ENCODE measurements at regions of chr15 and their contacts with region 1.

Region 1: DNA sequence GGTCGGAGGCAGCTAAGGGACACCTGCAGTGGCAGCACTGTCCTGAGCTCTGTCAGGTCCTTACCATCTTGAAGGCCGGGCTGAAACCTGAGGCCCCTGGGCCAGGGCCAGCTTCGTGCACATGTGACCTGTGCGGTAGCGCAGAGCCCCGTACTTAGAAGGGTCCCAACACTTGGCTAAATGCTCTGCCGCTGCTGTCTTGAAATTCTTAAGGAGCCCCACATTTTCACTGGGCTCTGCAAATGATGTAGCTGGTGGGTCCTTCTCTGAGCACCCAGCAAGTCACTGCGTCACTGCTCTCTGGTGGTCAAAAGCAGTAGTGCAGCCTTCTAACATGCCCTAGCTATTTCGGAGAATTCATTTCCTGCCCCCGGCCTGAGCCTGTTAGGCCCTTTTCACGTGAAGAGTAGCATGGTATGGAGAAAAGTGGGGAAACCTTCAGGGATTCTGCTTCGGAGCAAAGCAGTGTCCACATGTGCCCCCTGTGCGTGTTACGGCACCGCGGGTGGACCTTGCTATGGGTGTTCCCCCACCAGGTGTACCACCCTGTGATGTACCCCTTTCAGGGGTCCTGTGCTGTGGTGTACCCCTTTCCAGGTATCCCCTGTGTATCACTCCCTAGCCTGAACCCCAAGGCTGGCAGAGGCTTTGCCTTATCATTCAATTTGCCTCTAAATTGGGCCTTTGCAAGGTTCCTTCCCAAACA is 79.7 kb downstream of the TMEM266 start:
- DNase-seq: no peak
- H3K4me3 ChIP-seq: no peak overlapping the region
- H3K27me3 ChIP-seq: peaks cover 11% of the 10 kb centered on the region
- CTCF ChIP-seq: peak; percentile 96

Region 2: GRCh38 chr15:75790631-75791336 is 348.7 kb before region 1 on chr15:
- CTCF ChIA-PET with region 1: no interaction called
- POLR2A ChIA-PET with region 1: no interaction called
- DNase-seq: no peak
- H3K4me3 ChIP-seq: no peak overlapping the region
- H3K27me3 ChIP-seq: peaks cover 25% of the 10 kb centered on the region
- CTCF ChIP-seq: no peak

Region 3: GRCh38 chr15:75809986-75810750 is 329.4 kb before region 1 on chr15:
- CTCF ChIA-PET with region 1: interaction called, 30 read pairs
- POLR2A ChIA-PET with region 1: no interaction called
- DNase-seq: no peak
- H3K4me3 ChIP-seq: no peak overlapping the region
- H3K27me3 ChIP-seq: peaks cover 1% of the 10 kb centered on the region; the same call in 1 of the 2 replicates
- CTCF ChIP-seq: peak; percentile 34; the same call in 1 of the 2 replicates

Region 4: GRCh38 chr15:76057332-76058000 is 82.1 kb before region 1 on chr15:
- CTCF ChIA-PET with region 1: interaction called, 137 read pairs
- POLR2A ChIA-PET with region 1: no interaction called
- DNase-seq: no peak
- H3K4me3 ChIP-seq: no peak overlapping the region
- H3K27me3 ChIP-seq: peaks cover 26% of the 10 kb centered on the region
- CTCF ChIP-seq: peak; percentile 77

Region 5: DNA sequence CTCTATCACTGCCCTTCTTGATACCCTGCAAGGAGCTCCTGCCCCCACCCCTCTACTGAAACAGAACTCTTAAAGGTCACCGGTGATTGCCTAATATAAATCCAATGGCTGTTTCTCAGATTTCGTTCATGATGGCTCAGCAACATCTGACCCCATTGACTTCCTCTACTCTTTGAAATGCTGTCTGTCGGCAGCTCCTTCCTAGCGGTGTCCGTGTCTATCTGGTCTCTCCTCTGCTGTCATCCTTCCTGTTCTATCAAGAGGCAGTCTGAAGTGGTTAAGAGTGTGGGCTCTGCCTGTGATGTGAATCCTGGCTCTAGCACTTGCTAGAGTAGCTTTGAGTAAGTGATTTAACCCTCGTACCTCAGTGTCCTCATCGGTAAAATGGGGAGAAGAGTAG is 74.3 kb before region 1 on chr15:
- CTCF ChIA-PET with region 1: interaction called, 137 read pairs
- POLR2A ChIA-PET with region 1: no interaction called
- DNase-seq: no peak
- H3K4me3 ChIP-seq: no peak overlapping the region
- H3K27me3 ChIP-seq: peaks cover 33% of the 10 kb centered on the region
- CTCF ChIP-seq: no peak

Region 6: GRCh38 chr15:76108021-76108723 is 31.3 kb before region 1 on chr15:
- CTCF ChIA-PET with region 1: interaction called, 12 read pairs
- POLR2A ChIA-PET with region 1: no interaction called
- DNase-seq: no peak
- H3K4me3 ChIP-seq: no peak overlapping the region
- H3K27me3 ChIP-seq: no peaks in the 10 kb centered on the region
- CTCF ChIP-seq: no peak

Region 7: GRCh38 chr15:76127880-76128279 is 11.6 kb before region 1 on chr15:
- CTCF ChIA-PET with region 1: interaction called, 18 read pairs
- POLR2A ChIA-PET with region 1: no interaction called
- DNase-seq: no peak
- H3K4me3 ChIP-seq: no peak overlapping the region
- H3K27me3 ChIP-seq: no peaks in the 10 kb centered on the region; the same call in none of the 2 replicates
- CTCF ChIP-seq: no peak

Region 8: DNA sequence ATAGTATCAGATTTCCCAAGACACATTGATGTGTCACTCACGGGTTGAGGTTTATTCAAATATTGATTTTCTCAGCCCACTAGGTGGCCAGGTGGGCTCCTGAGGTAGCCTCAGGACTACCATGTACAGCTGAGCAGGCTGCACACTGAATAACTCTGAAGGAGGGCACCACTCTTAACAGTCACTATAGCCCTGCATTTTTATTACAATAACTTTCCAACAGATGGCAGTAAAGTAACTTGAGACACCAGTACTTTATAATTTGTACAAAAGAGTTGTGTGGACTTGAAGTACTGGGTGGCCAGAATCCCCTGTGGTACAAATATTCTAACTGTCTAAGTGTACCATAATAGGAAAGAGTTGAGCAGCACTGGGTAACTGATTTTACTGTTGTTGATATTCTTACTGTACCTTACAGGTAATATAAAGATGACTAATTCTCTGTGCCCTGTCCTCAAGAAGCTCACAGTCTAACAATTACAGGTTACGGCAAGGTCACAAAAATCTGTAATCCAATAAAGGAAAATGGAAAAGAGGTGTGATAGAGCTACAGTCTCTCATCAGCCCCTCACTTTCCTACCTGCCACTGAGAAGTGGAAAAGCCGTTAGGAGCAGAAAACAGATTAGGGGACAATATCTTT is 95.8 kb after region 1 on chr15:
- CTCF ChIA-PET with region 1: no interaction called
- POLR2A ChIA-PET with region 1: no interaction called
- DNase-seq: peak; percentile 15
- H3K4me3 ChIP-seq: no peak overlapping the region
- H3K27me3 ChIP-seq: no peaks in the 10 kb centered on the region
- CTCF ChIP-seq: peak; percentile 52

Region 9: DNA sequence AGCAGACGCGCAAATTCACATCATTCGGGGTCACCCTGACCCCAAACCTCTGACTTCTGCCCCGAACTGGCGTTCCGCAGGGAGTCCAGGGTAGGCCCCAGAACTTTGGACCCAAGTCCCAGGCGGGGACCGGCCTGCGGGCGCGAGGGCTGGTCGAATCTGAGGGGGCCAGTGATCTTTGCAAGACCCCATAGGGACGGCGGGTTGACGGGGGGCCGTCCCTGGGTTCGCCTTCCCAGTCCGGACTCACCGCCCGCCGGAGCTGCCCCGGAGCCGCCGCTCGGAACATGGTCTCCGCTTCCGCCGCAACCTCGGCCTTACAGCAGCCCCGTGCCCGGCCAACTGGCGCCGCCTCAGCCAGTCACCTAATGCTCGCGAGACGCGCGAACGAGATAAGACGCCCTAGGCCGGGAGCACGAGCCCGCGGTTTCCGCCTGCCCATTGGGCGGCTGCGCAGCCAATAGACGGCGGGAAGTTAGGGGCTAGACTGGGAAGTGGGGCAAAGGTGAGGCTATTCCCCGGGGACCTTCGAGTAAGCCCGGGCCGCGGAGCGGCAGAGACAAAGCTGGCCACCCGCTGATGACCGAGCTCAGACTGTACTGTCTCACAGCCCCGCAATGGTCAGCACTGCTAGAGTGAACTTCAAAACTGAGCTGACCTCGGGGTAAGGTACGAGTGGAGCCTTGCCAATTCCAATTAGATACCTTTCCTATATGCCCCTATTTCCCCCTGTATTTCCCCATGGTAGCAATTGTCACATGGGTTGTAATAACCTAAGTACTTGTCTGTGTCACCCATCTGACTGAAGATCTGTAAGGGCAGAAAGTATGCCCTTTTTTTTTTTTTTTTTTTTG is 171.8 kb after region 1 on chr15 and contains the start of gene ETFA:
- CTCF ChIA-PET with region 1: no interaction called
- POLR2A ChIA-PET with region 1: no interaction called
- DNase-seq: peak; percentile 62
- H3K4me3 ChIP-seq: peak within 1 kb of the TSS; percentile 74
- H3K27me3 ChIP-seq: no peaks in the 10 kb centered on the region
- CTCF ChIP-seq: no peak
- polyA plus RNA-seq, gene ETFA: 113 and 173 TPM in 2 replicates

Measured in BJ (cell line).